ENCODE measurements at regions of chr6 and their contacts with region 1.

Region 1: GRCh38 chr6:52271852-52272460 is 12.6 kb downstream of the MCM3 start:
- DNase-seq: no peak
- H3K4me3 ChIP-seq: no peak overlapping the region
- H3K27ac ChIP-seq: no peak overlapping the region
- H3K4me1 ChIP-seq: no peaks in the 10 kb centered on the region
- H3K27me3 ChIP-seq: no peaks in the 10 kb centered on the region
- CTCF ChIP-seq: no peak
- POLR2A ChIP-seq: no peak

Region 2: DNA sequence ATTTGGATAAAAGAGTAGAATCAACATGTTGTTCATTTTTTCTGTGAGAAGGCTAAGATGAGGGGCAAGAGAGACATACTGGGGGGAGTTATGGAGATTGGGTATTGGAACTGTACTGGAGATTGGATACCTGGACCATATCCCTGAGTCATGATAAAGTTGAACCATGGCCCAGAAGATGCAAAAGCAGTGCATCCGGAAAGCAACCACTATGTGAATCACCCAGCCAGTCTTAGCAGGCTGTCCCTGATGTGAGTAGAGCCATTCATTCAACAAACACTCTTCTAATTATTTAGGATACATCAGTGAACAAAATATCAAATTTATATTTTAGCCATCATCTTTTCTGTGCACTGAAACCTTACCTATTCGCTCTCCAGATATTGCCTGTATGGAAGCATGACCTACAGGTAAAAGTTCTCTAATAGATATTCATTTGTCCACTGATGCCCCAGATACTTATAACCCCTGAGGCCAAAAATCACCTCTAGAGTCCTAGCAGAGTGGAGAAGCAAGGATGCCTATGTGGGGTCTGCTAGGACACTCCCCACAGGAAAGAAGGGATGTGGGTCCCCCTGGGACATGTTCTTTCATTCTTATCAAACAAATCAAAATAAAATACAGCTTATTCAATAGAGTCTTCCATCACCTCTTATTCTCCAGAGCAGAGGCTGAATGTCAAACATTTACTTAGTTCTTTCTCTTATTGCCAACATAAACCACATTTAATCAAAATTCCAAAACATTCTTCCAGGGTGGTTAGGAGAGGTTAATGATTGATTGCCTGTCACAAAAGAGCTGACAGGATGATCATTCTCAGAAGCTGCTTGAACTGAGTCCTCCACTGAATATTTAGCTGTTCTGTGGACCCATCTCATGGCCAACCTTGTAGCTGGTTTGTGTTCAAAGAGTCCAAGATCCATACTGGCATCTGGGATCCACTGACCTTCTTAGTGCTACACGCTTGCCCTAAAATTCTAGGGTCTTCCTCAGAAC is 147.5 kb before region 1 on chr6:
- intact Hi-C with region 1: no loop called
- DNase-seq: no peak
- H3K4me3 ChIP-seq: no peak overlapping the region
- H3K27ac ChIP-seq: no peak overlapping the region
- H3K4me1 ChIP-seq: no peaks in the 10 kb centered on the region
- H3K27me3 ChIP-seq: no peaks in the 10 kb centered on the region
- CTCF ChIP-seq: no peak
- POLR2A ChIP-seq: no peak

Region 3: GRCh38 chr6:52399511-52400312 is 127.8 kb after region 1 on chr6:
- intact Hi-C with region 1: loop called in 1 of 2 experiments (anchors 10 kb)
- DNase-seq: peak; percentile 38 to 70 (median 57)
- H3K4me3 ChIP-seq: no peak overlapping the region
- H3K27ac ChIP-seq: no peak overlapping the region
- H3K4me1 ChIP-seq: no peaks in the 10 kb centered on the region
- H3K27me3 ChIP-seq: no peaks in the 10 kb centered on the region
- CTCF ChIP-seq: peak; percentile 81 to 94 (median 84)
- POLR2A ChIP-seq: no peak